ENCODE measurements at regions of chr2 and their contacts with region 1.

Region 1: DNA sequence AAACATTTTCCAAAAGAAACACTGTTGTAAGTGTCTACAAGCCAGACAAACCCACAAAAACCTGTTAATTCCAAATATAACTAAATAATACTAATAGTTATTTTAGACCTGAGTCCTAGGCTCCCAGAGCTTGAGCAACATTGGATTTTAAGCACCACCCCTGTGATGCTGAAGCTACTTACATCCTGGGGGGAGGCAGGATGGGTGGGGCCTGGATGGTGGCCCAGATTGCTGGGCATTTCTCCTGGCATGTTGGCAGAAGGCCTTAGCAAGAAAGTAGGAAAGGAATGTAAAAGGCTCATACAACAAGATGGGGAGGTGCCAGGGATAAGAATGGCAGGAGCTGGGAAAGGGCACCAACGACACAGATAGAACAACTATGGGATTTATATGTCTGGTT is 50.7 kb upstream of the OTX1 start:
- DNase-seq: peak in 1 of 2 experiments; percentile 23
- H3K4me3 ChIP-seq: no peak overlapping the region
- H3K27ac ChIP-seq: no peak overlapping the region
- H3K4me1 ChIP-seq: no peaks in the 10 kb centered on the region
- H3K27me3 ChIP-seq: no peaks in the 10 kb centered on the region
- CTCF ChIP-seq: no peak

Region 2: GRCh38 chr2:63801455-63801854 is 801.5 kb after region 1 on chr2:
- CTCF ChIA-PET with region 1: no interaction called
- POLR2A ChIA-PET with region 1: interaction called, 11 read pairs
- intact Hi-C with region 1: no loop called
- DNase-seq: no peak
- H3K4me3 ChIP-seq: no peak overlapping the region
- H3K27ac ChIP-seq: no peak overlapping the region
- H3K4me1 ChIP-seq: no peaks in the 10 kb centered on the region
- H3K27me3 ChIP-seq: no peaks in the 10 kb centered on the region
- CTCF ChIP-seq: no peak

Measured in PC-9 (cell line).